Uterus (tissue), 4 donors: ENCODE measurements at regions of chr18 and their contacts with region 1.

Region 1: DNA sequence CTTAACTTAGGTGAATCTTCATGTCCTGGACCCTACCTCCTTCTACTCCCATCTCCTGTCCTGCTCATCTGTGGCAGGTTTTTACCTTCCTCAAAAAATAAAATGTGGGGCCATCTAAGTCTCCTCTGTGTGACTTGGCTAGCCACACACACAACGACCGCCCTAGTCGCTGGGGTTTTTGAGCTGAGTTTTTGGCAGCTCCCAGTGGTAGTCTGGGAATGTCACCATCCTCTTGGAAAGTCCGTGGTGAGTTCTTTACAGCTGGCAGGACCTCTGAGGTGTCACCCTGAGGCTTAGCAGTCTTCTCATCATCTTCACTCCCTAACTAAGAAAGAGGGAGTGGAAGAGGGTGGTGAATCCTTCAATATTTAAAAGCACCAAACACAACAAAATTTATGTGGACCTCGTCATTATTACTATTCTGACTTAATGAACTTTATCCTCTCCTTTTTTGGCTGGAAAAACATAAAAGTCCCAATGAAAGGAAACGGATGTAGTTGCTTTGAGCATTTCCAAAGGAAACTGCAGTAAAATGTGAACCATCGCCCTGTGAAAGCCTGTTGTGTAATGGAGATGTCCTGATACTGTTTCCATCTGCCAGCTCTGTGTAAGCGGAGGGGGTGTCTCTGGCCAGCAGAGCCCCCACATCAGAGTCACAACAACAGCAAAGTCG is 78.6 kb downstream of the VAPA start:
- DNase-seq: peak; percentile 64 to 82
- H3K4me3 ChIP-seq: no peak overlapping the region
- H3K27ac ChIP-seq: peak overlapping the region; percentile 58 to 79
- H3K4me1 ChIP-seq: peaks cover 4 to 6% of the 10 kb centered on the region in 2 donors
- H3K27me3 ChIP-seq: no peaks in the 10 kb centered on the region
- CTCF ChIP-seq: no peak
- POLR2A ChIP-seq: no peak

Region 2: GRCh38 chr18:10140461-10141282 is 148.2 kb after region 1 on chr18:
- intact Hi-C with region 1: loop called (anchors 10 kb)
- DNase-seq: no peak
- H3K4me3 ChIP-seq: no peak overlapping the region
- H3K27ac ChIP-seq: no peak overlapping the region
- H3K4me1 ChIP-seq: no peaks in the 10 kb centered on the region
- H3K27me3 ChIP-seq: no peaks in the 10 kb centered on the region
- CTCF ChIP-seq: no peak
- POLR2A ChIP-seq: no peak